Breast epithelium (tissue), 4 donors: ENCODE measurements at regions of chr2 and their contacts with region 1.

Region 1: DNA sequence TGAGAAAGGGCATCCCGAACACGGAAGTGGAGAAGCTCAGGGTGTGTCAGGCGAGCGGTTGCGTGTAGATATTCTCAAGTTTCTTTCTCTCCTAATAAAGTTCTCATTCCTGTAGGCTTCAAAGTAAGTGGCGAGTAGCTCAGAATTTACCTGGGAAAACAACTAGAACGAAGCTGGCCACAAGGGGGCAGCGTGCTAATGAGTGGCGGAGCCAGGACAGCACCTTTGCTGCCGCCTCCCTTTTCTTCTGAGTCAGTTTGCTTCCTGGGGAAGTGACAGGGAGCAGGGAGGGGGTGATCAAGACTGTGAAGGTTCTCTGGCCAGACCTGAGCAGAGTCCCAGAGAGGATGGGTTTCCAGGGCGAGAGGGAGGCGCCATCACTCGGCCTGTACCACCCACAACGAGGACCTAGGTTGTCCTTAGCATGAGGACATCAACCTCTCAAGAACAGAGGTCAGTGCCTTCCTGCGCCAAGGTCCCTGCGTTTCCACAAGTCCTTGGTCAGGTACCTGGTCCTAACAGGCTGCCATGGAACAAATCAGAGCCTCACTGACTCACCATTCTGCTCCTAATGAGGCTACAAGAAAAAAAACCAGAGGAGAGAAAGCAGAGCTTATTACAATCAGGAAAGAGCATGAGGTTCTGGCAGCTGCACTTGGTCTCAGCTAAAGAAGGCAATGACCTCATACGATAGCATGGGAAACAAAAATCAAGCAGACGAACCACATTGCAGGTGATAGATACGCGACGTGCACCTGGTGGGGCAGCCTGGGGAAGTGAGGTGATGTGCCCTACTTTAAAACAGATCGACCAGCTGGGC is 98.6 kb downstream of the PLB1 start:
- DNase-seq: peak; percentile 91
- H3K4me3 ChIP-seq: peak overlapping the region in 2 of 3 donors; percentile 1 to 13
- H3K27ac ChIP-seq: peak overlapping the region; percentile 85 to 89
- H3K4me1 ChIP-seq: peaks cover 0 to 6% of the 10 kb centered on the region in 2 donors
- H3K27me3 ChIP-seq: no peaks in the 10 kb centered on the region
- CTCF ChIP-seq: peak; percentile 85 to 91 (median 86)
- POLR2A ChIP-seq: no peak

Region 2: GRCh38 chr2:28751252-28751955 is 156.9 kb after region 1 on chr2 and contains the start of gene PPP1CB:
- intact Hi-C with region 1: loop called (anchors 5 kb)
- DNase-seq: peak; percentile 95 to 96
- H3K4me3 ChIP-seq: peak within 1 kb of the TSS; percentile 93 to 97 (median 97)
- H3K27ac ChIP-seq: peak within 1 kb of the TSS; percentile 100
- H3K4me1 ChIP-seq: peaks cover 0 to 5% of the 10 kb centered on the region in 2 donors
- H3K27me3 ChIP-seq: no peaks in the 10 kb centered on the region
- CTCF ChIP-seq: peak in 1 of 3 donors; percentile 20
- POLR2A ChIP-seq: peak; percentile 69
- total RNA-seq, gene PPP1CB: 189 to 294 (median 289) TPM